Activated CD4-positive, alpha-beta T cell treated with anti-CD3 and anti-CD28 coated beads, Interleukin-2, amount 10 ng/mL, durations not matched to agents 24 days and 14 days (primary cell): ENCODE measurements at regions of chr5 and their contacts with region 1.

Region 1: GRCh38 chr5:59380350-59380951 is 513.1 kb downstream of the PDE4D start:
- DNase-seq: peak; percentile 70
- H3K4me3 Mint-ChIP-seq: no peak overlapping the region
- H3K27ac Mint-ChIP-seq: no peak overlapping the region
- H3K4me1 Mint-ChIP-seq: peaks cover 5% of the 10 kb centered on the region
- H3K27me3 Mint-ChIP-seq: peaks cover 16% of the 10 kb centered on the region

Region 2: GRCh38 chr5:58871648-58872242 is 508.7 kb before region 1 on chr5:
- intact Hi-C with region 1: loop called (anchors 1 kb)
- DNase-seq: peak; percentile 77
- H3K4me3 Mint-ChIP-seq: no peak overlapping the region
- H3K27ac Mint-ChIP-seq: no peak overlapping the region
- H3K4me1 Mint-ChIP-seq: no peaks in the 10 kb centered on the region
- H3K27me3 Mint-ChIP-seq: peaks cover 40% of the 10 kb centered on the region

Region 3: DNA sequence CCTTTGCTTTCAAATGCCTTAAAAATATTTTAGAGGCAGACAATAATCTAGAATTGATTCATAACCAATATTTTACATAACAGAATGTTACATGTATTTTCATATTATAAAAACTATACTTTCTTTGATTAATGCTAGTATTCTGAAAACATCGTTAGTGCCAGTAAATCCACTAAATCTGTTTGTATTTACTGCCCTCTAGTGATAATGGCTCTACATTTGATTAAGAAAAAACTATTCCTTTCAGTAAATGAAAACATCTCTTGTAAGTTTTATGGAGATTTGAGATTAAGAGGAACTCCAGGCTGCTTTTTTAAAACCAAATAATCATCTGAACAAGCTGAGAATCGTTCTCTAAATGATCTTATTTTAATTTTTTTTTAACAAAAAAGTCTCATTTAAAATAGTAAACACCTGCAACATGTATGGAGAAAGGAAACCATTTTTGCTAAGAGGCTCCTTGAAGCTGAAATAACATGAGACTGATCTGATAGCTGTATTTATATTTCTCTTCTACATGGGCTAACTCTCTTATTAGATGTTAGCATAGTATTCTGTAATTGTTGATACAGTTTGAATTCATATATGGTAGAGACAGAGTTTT is 372.9 kb before region 1 on chr5:
- intact Hi-C with region 1: no loop called
- DNase-seq: no peak
- H3K4me3 Mint-ChIP-seq: no peak overlapping the region
- H3K27ac Mint-ChIP-seq: no peak overlapping the region
- H3K4me1 Mint-ChIP-seq: peaks cover 55% of the 10 kb centered on the region
- H3K27me3 Mint-ChIP-seq: no peaks in the 10 kb centered on the region